ENCODE measurements at regions of chr12 and their contacts with region 1.

Region 1: DNA sequence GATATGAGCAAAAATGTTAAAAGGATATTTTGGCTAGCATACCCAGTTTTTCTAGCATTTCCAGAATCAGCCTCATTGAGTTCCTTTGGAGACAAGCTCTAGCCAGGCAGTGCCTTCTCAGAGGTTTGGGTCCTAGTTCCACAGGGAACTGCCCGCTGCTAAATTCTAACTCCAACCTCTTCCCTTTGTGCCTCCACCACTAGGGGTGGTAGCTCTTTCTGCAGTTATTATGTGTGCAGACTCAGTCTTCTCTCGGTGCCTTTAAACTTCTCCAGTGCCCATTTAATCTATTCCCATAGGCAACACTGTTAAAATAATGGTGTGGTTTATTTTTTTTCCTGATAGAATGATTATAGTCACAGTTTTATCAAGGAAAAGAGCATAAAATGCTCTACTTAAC is 21.5 kb upstream of the SLC25A3 start:
- DNase-seq: no peak
- H3K4me3 Mint-ChIP-seq: no peak overlapping the region
- H3K27ac Mint-ChIP-seq: no peak overlapping the region
- H3K4me1 Mint-ChIP-seq: no peaks in the 10 kb centered on the region
- H3K27me3 Mint-ChIP-seq: no peaks in the 10 kb centered on the region
- CTCF ChIP-seq: no peak

Region 2: DNA sequence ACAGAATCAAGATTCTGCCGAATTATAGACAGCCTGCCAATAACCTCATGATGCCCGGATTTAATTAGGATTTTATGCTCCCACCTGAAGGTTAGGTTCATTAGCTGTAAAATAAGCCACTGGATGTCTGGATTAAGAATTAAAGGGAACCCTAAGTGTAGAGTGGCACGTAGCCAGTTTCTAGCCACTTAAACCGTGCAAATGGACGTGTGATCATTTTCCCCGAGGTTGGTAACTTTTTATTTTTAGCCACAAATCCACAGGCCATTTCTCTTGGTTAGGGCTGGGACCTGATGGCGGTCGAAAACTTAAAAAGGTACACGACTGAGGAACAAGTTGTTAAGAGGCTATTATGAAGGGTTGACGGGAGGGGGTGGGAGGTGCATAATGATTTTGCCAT is 183.9 kb before region 1 on chr12:
- CTCF ChIA-PET with region 1: no interaction called
- POLR2A ChIA-PET with region 1: no interaction called
- intact Hi-C with region 1: no loop called
- DNase-seq: no peak
- H3K4me3 Mint-ChIP-seq: no peak overlapping the region
- H3K27ac Mint-ChIP-seq: no peak overlapping the region
- H3K4me1 Mint-ChIP-seq: no peaks in the 10 kb centered on the region
- H3K27me3 Mint-ChIP-seq: peaks cover 33% of the 10 kb centered on the region
- CTCF ChIP-seq: no peak

Region 3: DNA sequence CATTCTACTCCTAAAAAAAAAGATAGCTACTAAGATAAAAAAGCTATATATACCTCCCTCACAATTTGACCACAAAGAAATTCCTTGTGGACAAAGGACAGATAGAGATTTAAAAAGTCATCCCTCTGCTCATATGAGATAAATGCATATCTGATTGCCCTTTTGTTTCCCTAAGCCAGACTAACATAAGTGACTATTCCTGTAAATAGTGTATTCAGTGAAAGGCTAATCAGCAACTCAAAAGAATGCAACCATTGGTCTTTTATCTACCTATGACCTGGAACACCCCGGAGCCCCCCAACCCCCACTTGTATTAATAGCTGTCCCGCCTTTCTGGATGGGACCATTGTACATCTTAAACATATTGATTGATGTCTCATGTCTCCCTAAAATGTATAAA is 62.9 kb before region 1 on chr12:
- CTCF ChIA-PET with region 1: no interaction called
- POLR2A ChIA-PET with region 1: no interaction called
- intact Hi-C with region 1: no loop called
- DNase-seq: no peak
- H3K4me3 Mint-ChIP-seq: no peak overlapping the region
- H3K27ac Mint-ChIP-seq: no peak overlapping the region
- H3K4me1 Mint-ChIP-seq: peaks cover 14% of the 10 kb centered on the region
- H3K27me3 Mint-ChIP-seq: no peaks in the 10 kb centered on the region
- CTCF ChIP-seq: no peak

Region 4: DNA sequence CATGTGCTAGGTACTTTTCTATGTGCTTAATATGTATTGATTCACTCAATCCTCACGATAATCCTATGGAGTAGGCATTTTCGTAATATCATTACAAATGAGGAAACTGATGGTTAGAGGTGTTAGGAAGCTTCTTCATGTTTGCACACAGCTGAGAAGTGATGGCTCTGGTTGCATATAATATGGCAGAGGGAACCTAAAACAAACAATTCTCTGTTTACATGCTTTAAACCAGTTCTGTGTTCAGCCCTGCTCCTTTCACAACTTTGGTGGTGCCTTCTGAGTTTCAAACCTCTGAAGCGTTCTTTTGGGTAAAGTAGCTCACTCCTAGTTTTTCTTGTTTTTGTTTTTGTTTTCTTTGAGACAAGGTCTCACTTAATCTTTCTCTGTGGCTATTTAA is 21.2 kb before region 1 on chr12:
- CTCF ChIA-PET with region 1: interaction called, 22 read pairs
- POLR2A ChIA-PET with region 1: no interaction called
- intact Hi-C with region 1: no loop called
- DNase-seq: no peak
- H3K4me3 Mint-ChIP-seq: no peak overlapping the region
- H3K27ac Mint-ChIP-seq: no peak overlapping the region
- H3K4me1 Mint-ChIP-seq: no peaks in the 10 kb centered on the region
- H3K27me3 Mint-ChIP-seq: no peaks in the 10 kb centered on the region
- CTCF ChIP-seq: no peak

Region 5: GRCh38 chr12:98606357-98606988 is 34.5 kb after region 1 on chr12:
- CTCF ChIA-PET with region 1: interaction called, 18 read pairs
- POLR2A ChIA-PET with region 1: no interaction called
- intact Hi-C with region 1: no loop called
- DNase-seq: peak; percentile 14
- H3K4me3 Mint-ChIP-seq: no peak overlapping the region
- H3K27ac Mint-ChIP-seq: no peak overlapping the region
- H3K4me1 Mint-ChIP-seq: no peaks in the 10 kb centered on the region
- H3K27me3 Mint-ChIP-seq: no peaks in the 10 kb centered on the region
- CTCF ChIP-seq: peak; percentile 10

Region 6: GRCh38 chr12:98635657-98636323 is 63.8 kb after region 1 on chr12:
- CTCF ChIA-PET with region 1: interaction called, 12 read pairs
- POLR2A ChIA-PET with region 1: no interaction called
- intact Hi-C with region 1: no loop called
- DNase-seq: peak; percentile 78
- H3K4me3 Mint-ChIP-seq: peak overlapping the region; percentile 12
- H3K27ac Mint-ChIP-seq: peak overlapping the region; percentile 54
- H3K4me1 Mint-ChIP-seq: peaks cover 13% of the 10 kb centered on the region
- H3K27me3 Mint-ChIP-seq: no peaks in the 10 kb centered on the region
- CTCF ChIP-seq: no peak

Region 7: GRCh38 chr12:98644711-98645402 is 72.8 kb after region 1 on chr12 and contains the starts of genes APAF1 and IKBIP:
- CTCF ChIA-PET with region 1: interaction called, 90 read pairs
- POLR2A ChIA-PET with region 1: interaction called, 10 read pairs
- intact Hi-C with region 1: no loop called
- DNase-seq: peak; percentile 97
- H3K4me3 Mint-ChIP-seq: peak within 1 kb of the TSS; percentile 93
- H3K27ac Mint-ChIP-seq: peak within 1 kb of the TSS; percentile 93
- H3K4me1 Mint-ChIP-seq: peaks cover 7% of the 10 kb centered on the region
- H3K27me3 Mint-ChIP-seq: no peaks in the 10 kb centered on the region
- CTCF ChIP-seq: no peak
- total RNA-seq, gene APAF1: 5.9 and 9.1 TPM in 2 replicates
- total RNA-seq, gene IKBIP: 29.2 and 43.0 TPM in 2 replicates

Region 8: DNA sequence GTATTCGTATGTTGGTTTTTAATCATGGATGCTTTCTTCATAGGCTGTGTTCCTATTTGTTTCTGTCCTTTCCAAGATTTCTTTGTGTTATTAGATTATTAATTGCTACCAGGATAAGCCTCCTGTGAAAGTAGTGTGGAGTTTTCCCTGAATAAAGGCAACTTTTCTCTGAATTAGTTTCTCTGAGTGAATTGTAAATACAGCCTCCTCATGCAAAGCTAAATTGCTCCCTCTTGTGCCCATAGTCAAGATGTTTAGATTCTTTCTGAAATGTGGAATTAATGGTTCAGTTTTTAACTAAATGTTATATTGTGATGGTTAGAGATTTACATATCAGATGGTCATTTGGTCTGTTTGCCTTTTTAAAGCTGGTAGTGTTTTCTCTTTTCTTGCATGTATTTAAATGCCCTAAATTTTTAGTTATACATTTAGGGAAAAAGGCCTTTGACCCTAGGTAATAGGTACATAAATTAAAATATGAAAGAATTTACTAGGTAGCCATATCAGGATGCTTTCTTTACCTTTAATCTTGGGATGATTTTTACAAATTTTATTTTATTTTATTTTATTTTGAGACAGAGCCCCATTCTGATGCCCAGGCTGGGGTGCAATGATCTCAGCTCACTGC is 82.0 kb after region 1 on chr12:
- CTCF ChIA-PET with region 1: interaction called, 90 read pairs
- POLR2A ChIA-PET with region 1: interaction called, 6 read pairs
- intact Hi-C with region 1: loop called (anchors 1 kb)
- DNase-seq: peak; percentile 73
- H3K4me3 Mint-ChIP-seq: no peak overlapping the region
- H3K27ac Mint-ChIP-seq: no peak overlapping the region
- H3K4me1 Mint-ChIP-seq: peaks cover 8% of the 10 kb centered on the region
- H3K27me3 Mint-ChIP-seq: no peaks in the 10 kb centered on the region
- CTCF ChIP-seq: peak; percentile 79

Region 9: DNA sequence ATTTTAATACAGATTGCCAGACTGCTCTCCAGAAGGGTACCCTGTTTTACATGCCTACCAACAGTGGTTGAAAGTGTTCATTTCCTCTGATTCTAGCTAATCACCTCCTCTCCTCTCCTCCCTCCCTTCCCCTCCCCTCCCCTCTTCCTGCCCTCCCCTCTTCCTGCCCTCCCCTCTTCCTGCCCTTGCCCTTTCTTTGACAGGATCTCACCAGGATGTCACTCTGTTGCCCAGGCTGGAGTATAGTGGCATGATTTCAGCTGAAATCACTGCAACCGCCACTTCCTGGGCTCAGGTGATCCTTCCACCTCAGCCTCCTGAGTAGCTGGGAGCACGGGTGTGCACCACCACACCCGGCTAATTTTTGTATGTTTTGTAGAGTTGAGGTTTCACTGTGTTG is 97.7 kb after region 1 on chr12:
- CTCF ChIA-PET with region 1: interaction called, 12 read pairs
- POLR2A ChIA-PET with region 1: interaction called, 3 read pairs
- intact Hi-C with region 1: no loop called
- DNase-seq: no peak
- H3K4me3 Mint-ChIP-seq: no peak overlapping the region
- H3K27ac Mint-ChIP-seq: no peak overlapping the region
- H3K4me1 Mint-ChIP-seq: no peaks in the 10 kb centered on the region
- H3K27me3 Mint-ChIP-seq: no peaks in the 10 kb centered on the region
- CTCF ChIP-seq: no peak